ENCODE measurements at regions of chr15 and their contacts with region 1.

Region 1: DNA sequence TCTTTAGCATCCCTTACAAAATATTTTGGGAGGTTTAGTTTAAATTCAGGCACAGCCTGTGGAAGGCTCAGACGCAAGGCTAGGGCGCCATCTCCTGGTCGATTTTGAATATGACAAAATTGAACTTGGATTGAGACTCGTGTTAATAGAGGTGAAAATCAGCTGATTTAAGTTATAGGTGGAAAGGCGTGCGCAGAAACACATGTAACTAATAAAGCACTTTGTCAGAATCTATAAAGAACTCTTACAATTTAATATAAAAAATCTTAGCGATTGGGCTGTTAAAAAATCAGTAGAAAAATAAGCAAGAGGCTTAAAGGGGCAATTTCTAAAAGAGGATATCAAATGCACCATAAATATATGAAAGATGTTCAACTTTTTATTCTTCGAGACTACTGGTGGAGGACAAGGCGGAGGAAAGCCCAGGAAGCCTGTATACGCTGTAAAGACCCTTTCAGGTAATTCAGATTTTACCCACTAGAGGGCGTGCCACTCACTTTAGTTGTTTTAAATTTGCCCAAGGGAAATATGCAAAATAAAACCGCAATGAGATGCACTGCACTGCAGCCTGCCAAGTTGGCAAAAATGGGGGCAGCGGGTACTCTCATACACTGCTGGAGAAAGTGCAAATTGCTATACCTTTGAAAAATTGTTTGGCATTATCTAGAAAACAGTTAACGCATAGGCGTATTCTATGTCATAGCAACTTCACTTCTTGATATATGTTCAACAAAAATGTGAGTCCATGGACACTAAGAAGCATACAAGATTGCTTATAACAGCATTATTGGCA is 64.7 kb downstream of the SLC30A4 start:
- DNase-seq: peak; percentile 82
- ATAC-seq: peak; percentile 83

Region 2: GRCh38 chr15:45611305-45611704 is 153.5 kb after region 1 on chr15:
- intact Hi-C with region 1: loop called (anchors 10 kb)
- DNase-seq: no peak
- ATAC-seq: no peak

Region 3: GRCh38 chr15:45827271-45827670 is 369.4 kb after region 1 on chr15:
- intact Hi-C with region 1: no loop called
- DNase-seq: no peak
- ATAC-seq: no peak

Measured in sciatic nerve (tissue), 2 donors.